Psoas muscle (tissue), 8 donors: ENCODE measurements at regions of chrX and their contacts with region 1.

Region 1: DNA sequence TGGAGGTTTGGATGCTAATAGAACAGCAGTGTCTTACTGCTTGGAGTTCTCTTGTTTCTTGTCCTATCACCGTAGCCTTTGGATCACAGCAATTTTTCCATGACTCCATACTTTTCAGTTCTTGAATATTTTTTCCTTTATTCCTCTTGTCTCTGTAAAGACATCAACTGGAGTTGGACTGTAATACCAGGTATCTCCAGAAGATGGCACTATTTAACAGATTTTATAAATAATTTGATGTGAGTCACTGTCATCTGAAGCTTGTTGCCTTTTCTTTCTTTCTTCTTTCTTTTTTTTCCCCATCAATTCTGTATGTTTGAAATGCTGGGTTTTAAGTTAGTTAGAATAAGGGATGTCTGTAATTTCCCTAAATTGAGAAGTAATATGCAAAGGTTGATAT is 24.1 kb downstream of the HPRT1 start:
- DNase-seq: no peak
- ATAC-seq: peak in 2 of 4 donors; percentile 55 to 61
- H3K4me3 ChIP-seq: no peak overlapping the region
- H3K27ac ChIP-seq: no peak overlapping the region
- H3K4me1 ChIP-seq: no peaks in the 10 kb centered on the region
- H3K27me3 ChIP-seq: no peaks in the 10 kb centered on the region
- CTCF ChIP-seq: peak; percentile 73

Region 2: DNA sequence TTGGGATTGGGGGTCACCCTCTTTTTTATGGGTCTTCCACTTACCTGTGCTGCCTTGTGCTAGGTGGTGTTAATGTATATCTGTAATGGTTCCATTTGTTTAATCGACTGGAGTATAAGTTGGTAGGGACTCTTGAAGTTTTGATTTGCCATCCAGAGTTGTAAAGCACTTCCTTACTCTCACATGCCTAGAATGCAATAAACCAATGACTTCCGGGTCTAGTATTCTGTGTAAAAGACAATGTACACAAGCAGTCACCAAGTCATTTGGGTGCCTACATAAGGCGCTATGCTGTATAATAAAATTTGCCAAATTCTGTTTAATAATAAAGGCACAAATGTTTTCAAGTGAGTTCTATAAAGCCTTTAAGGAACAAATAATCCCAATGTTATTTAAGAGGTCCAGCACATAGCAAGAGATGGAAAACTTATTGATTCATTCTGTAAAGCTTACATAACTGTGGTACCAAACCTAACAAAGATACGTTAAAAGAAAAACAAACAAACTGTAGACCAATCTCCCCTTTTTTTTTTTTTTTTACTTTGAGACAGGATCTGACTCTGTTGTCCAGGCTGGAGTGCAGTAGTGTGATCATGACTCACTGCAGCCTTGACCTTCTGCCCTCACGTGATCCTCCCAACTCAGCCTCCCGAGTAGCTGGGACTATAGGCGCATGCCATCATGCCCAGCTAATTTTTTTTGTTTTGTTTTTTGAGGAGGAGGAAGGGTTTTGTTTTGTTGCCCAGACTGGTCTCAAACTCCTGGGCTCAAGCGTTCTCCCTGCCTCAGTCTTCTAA is 65.5 kb before region 1 on chrX:
- intact Hi-C with region 1: no loop called
- DNase-seq: no peak
- ATAC-seq: no peak
- H3K4me3 ChIP-seq: no peak overlapping the region
- H3K27ac ChIP-seq: no peak overlapping the region
- H3K4me1 ChIP-seq: no peaks in the 10 kb centered on the region
- H3K27me3 ChIP-seq: peaks cover 0 to 4% (median 0%) of the 10 kb centered on the region in 3 donors
- CTCF ChIP-seq: no peak

Region 3: GRCh38 chrX:134706138-134706537 is 222.1 kb after region 1 on chrX:
- intact Hi-C with region 1: no loop called
- DNase-seq: no peak
- ATAC-seq: peak in 2 of 4 donors; percentile 63 to 74
- H3K4me3 ChIP-seq: no peak overlapping the region
- H3K27ac ChIP-seq: no peak overlapping the region
- H3K4me1 ChIP-seq: no peaks in the 10 kb centered on the region
- H3K27me3 ChIP-seq: no peaks in the 10 kb centered on the region
- CTCF ChIP-seq: no peak

Region 4: DNA sequence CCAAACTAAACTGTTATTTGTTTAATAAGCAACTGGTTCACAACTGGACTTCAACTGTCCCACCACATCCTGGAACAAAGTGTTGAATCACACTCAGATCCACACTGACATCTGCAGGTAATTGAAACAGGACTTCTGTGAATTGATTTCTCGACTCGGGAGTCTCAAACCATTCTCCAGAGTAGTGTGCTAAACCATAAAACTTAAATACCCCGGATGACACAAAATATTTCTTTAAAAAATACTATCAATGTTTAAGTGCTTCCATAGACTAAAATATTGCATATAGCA is 269.6 kb after region 1 on chrX:
- intact Hi-C with region 1: loop called (anchors 10 kb)
- DNase-seq: no peak
- ATAC-seq: peak; percentile 62 to 79 (median 66)
- H3K4me3 ChIP-seq: no peak overlapping the region
- H3K27ac ChIP-seq: no peak overlapping the region
- H3K4me1 ChIP-seq: no peaks in the 10 kb centered on the region
- H3K27me3 ChIP-seq: no peaks in the 10 kb centered on the region
- CTCF ChIP-seq: peak; percentile 40

Region 5: DNA sequence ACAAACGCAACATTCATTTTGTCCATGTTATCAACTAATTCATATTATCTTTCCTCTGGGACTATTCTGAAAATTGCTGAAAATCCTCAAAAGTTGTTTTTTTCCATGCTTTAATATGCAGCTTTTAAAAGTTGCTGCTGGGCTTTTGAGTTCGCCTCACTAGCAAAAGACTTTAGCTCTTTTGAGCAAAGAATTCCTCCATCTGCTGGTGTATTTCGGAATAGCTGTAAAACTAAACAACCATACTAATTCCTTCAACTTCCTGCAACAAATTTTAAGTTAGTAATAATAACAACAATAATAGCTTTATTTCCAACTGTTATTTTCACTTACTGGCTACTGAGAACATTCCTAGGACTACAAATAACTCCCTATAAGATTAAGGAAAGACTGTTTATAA is 298.8 kb after region 1 on chrX:
- intact Hi-C with region 1: loop called in 1 of 2 experiments (anchors 10 kb)
- DNase-seq: no peak
- ATAC-seq: no peak
- H3K4me3 ChIP-seq: no peak overlapping the region
- H3K27ac ChIP-seq: no peak overlapping the region
- H3K4me1 ChIP-seq: no peaks in the 10 kb centered on the region
- H3K27me3 ChIP-seq: no peaks in the 10 kb centered on the region
- CTCF ChIP-seq: peak; percentile 60